Ascending aorta (tissue), 2 donors: ENCODE measurements at regions of chr2 and their contacts with region 1.

Region 1: GRCh38 chr2:24075915-24076848 is at the start of gene SF3B6:
- DNase-seq: peak; percentile 98 to 99
- H3K4me3 ChIP-seq: peak within 1 kb of the TSS; percentile 57 to 79
- H3K27ac ChIP-seq: peak within 1 kb of the TSS; percentile 92 to 94
- H3K4me1 ChIP-seq: peaks cover 2 to 4% of the 10 kb centered on the region in 2 donors
- H3K27me3 ChIP-seq: no peaks in the 10 kb centered on the region
- CTCF ChIP-seq: no peak
- total RNA-seq, gene SF3B6: 26.9 TPM

Region 2: DNA sequence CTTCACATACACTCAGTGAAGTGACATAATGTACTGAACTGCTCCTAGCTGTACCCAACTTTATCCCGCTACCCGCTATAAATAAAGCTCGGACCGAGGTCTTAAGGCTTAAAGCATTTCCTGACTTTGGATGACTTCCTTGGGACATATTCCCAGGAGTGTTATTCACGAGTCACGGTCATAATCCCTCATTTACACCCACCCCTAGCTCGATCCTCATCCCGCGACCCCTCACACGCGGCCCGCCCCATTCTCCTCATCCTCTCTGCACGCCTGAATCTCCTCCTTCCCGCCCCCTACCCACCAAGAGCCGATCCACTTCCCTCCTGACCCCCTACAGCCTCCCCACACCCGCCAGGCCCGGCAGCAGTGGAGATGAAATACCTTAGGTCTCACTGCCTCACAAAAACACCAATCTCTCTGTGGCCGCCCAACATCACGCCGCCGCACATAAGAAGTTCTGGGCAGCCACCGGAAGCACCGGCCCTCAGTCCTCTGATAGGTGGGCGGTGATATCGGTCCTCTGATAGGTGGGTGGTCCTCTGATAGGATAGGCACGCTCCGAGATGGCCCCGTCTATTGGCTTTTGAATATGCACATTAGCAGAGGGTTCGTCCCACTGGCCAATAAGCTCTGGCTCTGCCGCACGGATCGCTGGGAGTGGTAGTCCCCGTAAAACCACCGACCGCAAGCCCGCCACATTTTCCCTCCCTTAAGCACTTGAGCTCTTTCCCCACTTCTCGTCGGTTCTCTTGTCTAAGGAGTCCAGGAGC is 29.1 kb before region 1 on chr2 and contains the start of gene WDCP:
- intact Hi-C with region 1: loop called (anchors 1 kb)
- DNase-seq: peak; percentile 96 to 99
- H3K4me3 ChIP-seq: peak within 1 kb of the TSS; percentile 79 to 86
- H3K27ac ChIP-seq: peak within 1 kb of the TSS; percentile 68 to 75
- H3K4me1 ChIP-seq: peaks cover 0 to 17% of the 10 kb centered on the region in 2 donors
- H3K27me3 ChIP-seq: no peaks in the 10 kb centered on the region
- CTCF ChIP-seq: no peak
- total RNA-seq, gene WDCP: 1.9 TPM

Region 3: GRCh38 chr2:24509425-24509824 is 433.2 kb after region 1 on chr2:
- intact Hi-C with region 1: no loop called
- DNase-seq: no peak
- H3K4me3 ChIP-seq: no peak overlapping the region
- H3K27ac ChIP-seq: no peak overlapping the region
- H3K4me1 ChIP-seq: peaks cover 5 to 22% of the 10 kb centered on the region in 2 donors
- H3K27me3 ChIP-seq: no peaks in the 10 kb centered on the region
- CTCF ChIP-seq: no peak